Calu3 (cell line): ENCODE measurements at regions of chr18 and their contacts with region 1.

Region 1: GRCh38 chr18:76492669-76493212 is 2.3 kb downstream of the ZNF516 start:
- DNase-seq: peak; percentile 99
- H3K4me3 Mint-ChIP-seq: peak overlapping the region; percentile 89
- H3K27ac Mint-ChIP-seq: peak overlapping the region; percentile 91
- H3K4me1 Mint-ChIP-seq: peaks cover 27% of the 10 kb centered on the region
- H3K27me3 Mint-ChIP-seq: no peaks in the 10 kb centered on the region
- CTCF ChIP-seq: no peak

Region 2: DNA sequence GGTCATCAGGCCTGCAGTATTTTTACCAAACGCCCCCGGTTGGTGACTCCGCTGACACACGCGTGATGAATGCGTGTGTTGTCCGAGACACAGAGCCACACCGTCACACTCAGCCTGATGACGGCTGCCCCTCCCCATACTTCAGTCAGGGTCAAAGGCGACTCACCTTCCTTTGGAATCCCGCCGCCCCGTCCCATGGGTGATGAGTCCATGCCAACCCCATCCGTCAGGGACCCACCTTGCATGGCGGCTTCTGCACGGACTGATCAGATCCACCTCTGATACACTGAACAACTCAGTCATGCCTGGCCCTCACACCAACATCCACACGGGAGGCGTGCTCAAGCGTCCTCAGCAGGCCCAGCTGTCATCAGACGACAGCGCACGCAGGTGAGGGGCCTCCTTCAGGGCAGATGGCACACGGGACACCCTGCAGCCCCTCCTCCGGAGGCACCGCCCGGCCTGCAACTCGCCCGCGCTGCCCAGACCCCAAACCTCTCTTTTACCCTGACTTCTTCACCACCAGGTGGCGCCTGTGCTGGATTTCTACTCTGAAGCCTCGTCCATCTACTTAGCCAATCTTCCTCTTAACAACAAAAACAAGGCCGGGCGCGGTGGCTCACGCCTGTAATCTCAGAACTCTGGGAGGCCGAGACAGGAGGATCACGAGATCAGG is 86.9 kb before region 1 on chr18:
- CTCF ChIA-PET with region 1: no interaction called
- intact Hi-C with region 1: loop called (anchors 5 kb)
- DNase-seq: peak; percentile 55
- H3K4me3 Mint-ChIP-seq: no peak overlapping the region
- H3K27ac Mint-ChIP-seq: no peak overlapping the region
- H3K4me1 Mint-ChIP-seq: no peaks in the 10 kb centered on the region
- H3K27me3 Mint-ChIP-seq: no peaks in the 10 kb centered on the region
- CTCF ChIP-seq: peak; percentile 39

Region 3: DNA sequence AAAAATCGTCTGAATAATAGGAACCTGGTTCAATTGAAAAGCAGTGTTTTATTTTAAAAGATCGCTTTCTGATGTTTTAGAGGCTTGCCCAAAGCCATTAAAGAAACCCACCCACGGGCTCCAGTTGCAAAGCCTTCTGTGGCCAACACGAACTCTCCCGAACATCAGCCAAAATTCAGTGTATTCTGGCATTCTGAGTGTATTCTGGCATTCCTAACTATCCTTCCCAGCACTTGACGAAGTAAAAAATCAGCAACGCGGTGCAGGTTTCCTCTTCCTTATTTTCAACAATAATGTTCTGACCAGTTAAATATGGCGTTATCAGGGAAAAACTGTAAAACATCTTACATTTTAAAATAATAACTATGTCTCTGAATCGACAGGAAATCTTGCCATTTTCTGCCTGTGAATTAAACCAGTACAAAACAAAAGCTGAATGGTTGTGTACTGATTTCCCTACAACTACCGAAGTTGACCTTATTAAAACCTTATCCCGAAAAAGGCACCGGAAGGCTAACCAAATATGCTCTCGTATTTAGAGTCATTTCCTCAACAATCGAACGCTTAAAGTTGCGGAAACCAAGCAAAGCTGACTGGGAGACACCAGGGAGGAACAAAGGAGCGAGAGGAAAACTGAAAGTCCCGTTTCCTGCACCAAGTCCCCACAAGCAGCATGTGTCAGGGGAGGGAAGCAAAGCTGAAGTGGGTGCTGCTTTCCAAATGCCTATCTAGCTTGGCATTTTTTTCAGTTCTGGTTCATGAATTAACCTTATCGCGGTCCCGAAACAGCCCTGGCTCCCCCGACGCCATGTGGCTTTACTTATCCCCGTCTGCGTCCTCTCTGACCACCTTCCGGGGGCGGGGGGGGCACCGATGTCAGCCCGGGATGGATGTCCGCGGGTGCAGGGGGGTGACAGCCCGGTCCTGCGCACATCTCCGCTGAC is 42.0 kb before region 1 on chr18:
- CTCF ChIA-PET with region 1: interaction called, 3 read pairs
- intact Hi-C with region 1: loop called (anchors 5 kb)
- DNase-seq: peak; percentile 37
- H3K4me3 Mint-ChIP-seq: peak overlapping the region; percentile 77
- H3K27ac Mint-ChIP-seq: peak overlapping the region; percentile 50
- H3K4me1 Mint-ChIP-seq: peaks cover 80% of the 10 kb centered on the region
- H3K27me3 Mint-ChIP-seq: no peaks in the 10 kb centered on the region
- CTCF ChIP-seq: no peak

Region 4: DNA sequence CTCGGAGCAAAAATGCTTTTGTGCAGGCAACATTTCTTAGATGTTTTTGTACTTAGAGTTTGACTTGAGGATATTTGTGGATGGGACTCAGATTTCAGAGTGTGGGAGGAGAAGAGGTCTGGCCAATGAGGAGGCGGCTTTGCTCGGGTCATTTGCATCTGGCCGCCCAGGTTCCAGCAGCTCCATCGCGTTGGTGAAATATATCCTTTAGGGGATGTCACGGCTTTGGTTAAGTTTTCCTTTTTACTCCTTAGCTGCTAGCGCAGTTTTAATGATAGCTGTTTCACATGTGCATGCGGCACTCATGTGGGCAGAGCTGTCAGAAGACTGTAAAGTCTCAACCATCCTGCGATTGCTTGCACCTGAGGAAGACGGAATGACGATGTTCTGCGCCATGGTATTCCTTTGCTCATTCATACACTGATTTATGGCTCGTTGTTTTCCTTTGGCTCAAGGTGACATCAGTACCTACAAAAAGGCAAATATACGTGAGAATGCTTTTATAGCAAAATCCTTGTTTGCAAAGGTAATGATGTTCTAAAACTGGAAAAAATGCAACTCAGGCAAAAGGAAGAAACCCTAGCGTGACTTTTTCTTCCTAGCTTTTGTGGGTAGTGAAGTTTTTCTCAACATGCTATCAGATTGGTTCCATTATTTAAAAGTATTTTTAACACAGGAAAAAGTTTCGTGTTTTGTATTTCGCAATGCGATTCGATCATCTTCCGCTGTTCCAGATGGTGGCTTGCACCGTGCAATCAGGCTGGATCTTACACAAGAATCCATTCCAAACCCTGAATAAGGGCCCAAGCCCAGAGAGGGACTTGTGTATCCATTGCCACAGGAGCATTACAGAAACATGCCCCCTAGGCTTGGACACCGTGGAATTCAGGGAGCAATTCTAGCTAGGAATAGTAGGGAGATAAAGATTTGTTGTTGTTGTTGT is 72.8 kb after region 1 on chr18:
- CTCF ChIA-PET with region 1: no interaction called
- intact Hi-C with region 1: loop called (anchors 2 kb)
- DNase-seq: no peak
- H3K4me3 Mint-ChIP-seq: no peak overlapping the region
- H3K27ac Mint-ChIP-seq: no peak overlapping the region
- H3K4me1 Mint-ChIP-seq: no peaks in the 10 kb centered on the region
- H3K27me3 Mint-ChIP-seq: no peaks in the 10 kb centered on the region
- CTCF ChIP-seq: no peak

Region 5: DNA sequence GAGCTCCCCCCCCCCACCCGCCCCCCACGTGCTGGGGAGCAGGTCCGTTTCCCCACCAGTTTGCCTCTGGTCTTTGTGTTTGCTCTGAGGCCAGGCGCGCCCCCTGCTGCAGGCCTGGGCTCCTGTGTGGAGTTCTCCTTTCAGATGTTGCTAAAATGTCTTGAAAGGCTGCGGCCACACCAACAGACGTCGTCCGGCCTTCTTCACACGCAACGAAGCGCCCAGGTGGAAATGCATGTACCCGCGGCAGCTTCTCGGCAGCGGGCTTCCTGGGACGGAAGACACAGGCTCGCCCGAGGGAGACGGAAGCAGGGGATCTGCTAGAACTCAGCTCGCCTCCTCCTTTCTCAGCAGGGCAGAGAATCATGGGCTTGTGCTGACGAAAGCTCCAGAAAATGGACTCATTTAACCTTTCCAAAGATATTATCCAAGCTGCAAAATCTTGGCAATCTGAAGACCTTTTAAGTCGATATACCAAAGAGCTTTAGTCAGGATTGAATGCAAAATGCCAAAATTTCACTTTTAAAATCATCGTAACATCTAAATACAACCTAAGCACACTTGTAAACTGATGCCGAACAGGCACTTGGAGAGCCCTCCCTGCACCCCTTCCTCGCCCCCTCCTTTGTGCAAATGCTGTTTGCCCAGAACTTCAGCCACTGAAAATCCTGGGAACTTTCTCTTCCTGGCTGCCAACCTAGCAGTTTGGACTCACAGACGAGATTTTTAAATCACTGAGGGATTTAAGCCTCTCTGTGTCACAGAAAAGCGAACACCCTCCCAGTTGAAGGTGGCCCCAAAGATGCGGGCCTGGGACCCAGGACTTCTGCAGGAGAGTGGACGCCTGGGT is 127.8 kb after region 1 on chr18:
- CTCF ChIA-PET with region 1: no interaction called
- intact Hi-C with region 1: loop called (anchors 5 kb)
- DNase-seq: peak; percentile 73
- H3K4me3 Mint-ChIP-seq: peak overlapping the region; percentile 50
- H3K27ac Mint-ChIP-seq: no peak overlapping the region
- H3K4me1 Mint-ChIP-seq: peaks cover 14% of the 10 kb centered on the region
- H3K27me3 Mint-ChIP-seq: peaks cover 19% of the 10 kb centered on the region
- CTCF ChIP-seq: peak; percentile 63

Region 6: DNA sequence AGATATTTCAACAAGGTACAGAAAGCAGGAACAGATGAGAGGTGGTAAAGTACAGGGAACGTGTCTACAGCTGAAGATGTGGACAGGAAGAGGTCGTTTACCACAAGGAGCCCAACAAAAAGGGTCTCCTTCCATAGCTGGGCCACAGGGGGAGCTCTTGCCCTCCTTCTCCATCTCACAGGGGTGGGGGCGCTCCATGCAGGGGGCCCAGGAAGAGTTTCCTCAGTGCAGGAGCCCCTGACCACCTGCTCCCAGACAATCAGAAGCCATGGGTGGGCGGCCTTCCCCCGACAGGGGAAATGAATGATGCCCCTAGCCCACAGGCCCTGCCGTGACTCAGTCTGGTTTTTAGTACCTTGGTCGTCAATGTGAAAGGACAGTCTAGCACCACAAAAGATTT is 165.9 kb after region 1 on chr18:
- CTCF ChIA-PET with region 1: no interaction called
- intact Hi-C with region 1: no loop called
- DNase-seq: no peak
- H3K4me3 Mint-ChIP-seq: no peak overlapping the region
- H3K27ac Mint-ChIP-seq: no peak overlapping the region
- H3K4me1 Mint-ChIP-seq: no peaks in the 10 kb centered on the region
- H3K27me3 Mint-ChIP-seq: peaks cover 80% of the 10 kb centered on the region
- CTCF ChIP-seq: no peak

Region 7: DNA sequence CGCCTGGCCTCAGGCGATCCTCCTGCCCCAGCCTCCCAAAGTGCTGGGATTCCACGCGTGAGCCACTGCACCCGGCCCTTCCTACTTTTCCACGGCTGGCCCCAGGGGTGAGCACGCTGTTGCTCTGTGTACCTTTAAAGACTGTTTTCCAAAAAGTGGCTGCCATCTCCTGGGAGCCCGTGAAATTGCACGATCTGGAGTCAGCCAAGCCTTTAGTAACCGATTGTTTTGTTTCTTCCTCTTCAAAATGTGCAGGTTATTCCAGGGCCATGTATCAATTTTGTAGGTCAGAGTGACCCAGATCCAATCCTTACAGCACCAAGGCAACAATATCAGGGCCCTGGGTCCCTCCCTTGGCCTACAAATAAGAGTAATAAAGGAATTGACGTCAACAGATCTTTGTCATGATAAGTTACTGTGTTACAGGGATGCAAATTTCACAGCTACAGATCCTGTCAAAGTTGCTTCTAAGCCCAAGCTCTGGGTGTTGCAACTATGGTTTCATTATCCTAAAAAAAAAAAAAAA is 194.1 kb after region 1 on chr18:
- CTCF ChIA-PET with region 1: no interaction called
- intact Hi-C with region 1: loop called (anchors 2 kb)
- DNase-seq: peak; percentile 67
- H3K4me3 Mint-ChIP-seq: peak overlapping the region; percentile 41
- H3K27ac Mint-ChIP-seq: peak overlapping the region; percentile 69
- H3K4me1 Mint-ChIP-seq: peaks cover 18% of the 10 kb centered on the region
- H3K27me3 Mint-ChIP-seq: peaks cover 37% of the 10 kb centered on the region
- CTCF ChIP-seq: peak; percentile 56